ENCODE measurements at regions of chr1 and their contacts with region 1.

Region 1: GRCh38 chr1:51871351-51871975 is 7.1 kb downstream of the NRDC start:
- DNase-seq: no peak
- ATAC-seq: no peak
- H3K4me3 ChIP-seq: no peak overlapping the region
- H3K27ac ChIP-seq: peak overlapping the region; percentile 30; the same call in 1 of the 3 replicates
- H3K4me1 ChIP-seq: peaks cover 26 to 39% of the 10 kb centered on the region in 2 experiments; a peak in 4 of 5 replicates
- H3K27me3 ChIP-seq: no peaks in the 10 kb centered on the region
- CTCF ChIP-seq: no peak
- EP300 ChIP-seq: no peak
- POLR2A ChIP-seq: 0 out of 2 replicates have a peak, but pooled peaks have one; percentile 8
- RAD21 ChIP-seq: no peak

Region 2: DNA sequence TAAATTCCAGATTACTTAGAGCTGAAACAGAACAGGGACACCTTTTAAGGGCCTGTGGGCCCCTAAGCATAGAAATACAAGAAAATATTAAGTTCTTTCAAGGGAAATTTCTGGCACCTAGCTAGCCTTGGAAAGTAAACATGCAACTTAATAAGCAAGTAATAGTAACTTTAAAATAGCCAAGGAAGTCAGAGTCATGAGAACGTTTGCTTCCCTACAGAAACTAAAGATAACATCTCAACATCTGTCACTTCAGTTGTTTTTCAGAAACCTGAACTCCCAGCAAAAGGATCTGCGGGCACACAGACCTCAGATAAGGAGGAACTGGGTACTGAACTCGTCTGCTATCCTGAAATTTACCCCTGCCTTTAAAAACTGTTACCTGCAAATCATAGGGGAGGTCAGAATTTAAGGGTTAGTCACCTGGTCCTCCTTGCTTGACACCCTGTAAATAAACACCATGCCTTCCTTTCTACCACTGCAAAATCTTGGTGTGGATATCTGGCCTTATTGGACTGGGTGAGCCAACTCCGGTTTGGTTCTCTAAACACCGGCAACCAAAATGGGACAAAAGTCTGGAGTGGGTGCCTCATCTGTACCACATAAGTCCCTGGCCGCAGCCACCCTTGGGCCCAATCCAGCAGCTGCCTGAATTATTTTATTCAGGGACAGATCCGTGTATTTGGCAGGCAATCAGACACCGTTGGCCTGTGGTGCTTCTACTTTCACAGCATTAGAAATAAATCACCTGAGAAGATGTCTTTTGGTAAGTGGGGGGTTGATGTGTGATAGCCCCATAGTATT is 20.8 kb before region 1 on chr1:
- CTCF ChIA-PET with region 1: no interaction called
- POLR2A ChIA-PET with region 1: interaction called, 12 read pairs
- in situ Hi-C with region 1: no loop called
- intact Hi-C with region 1: loop called (anchors 2 kb)
- DNase-seq: peak in 3 of 4 experiments; percentile 28 to 83 (median 51)
- ATAC-seq: peak; percentile 78
- H3K4me3 ChIP-seq: 0 out of 2 replicates have a peak overlapping the region, but pooled peaks have one; percentile 5
- H3K27ac ChIP-seq: peak overlapping the region; percentile 78
- H3K4me1 ChIP-seq: peaks cover 4 to 22% of the 10 kb centered on the region in 2 experiments; a peak in 4 of 5 replicates
- H3K27me3 ChIP-seq: no peaks in the 10 kb centered on the region
- CTCF ChIP-seq: no peak
- EP300 ChIP-seq: peak; percentile 90
- POLR2A ChIP-seq: 0 out of 2 replicates have a peak, but pooled peaks have one; percentile 7
- RAD21 ChIP-seq: no peak

Region 3: DNA sequence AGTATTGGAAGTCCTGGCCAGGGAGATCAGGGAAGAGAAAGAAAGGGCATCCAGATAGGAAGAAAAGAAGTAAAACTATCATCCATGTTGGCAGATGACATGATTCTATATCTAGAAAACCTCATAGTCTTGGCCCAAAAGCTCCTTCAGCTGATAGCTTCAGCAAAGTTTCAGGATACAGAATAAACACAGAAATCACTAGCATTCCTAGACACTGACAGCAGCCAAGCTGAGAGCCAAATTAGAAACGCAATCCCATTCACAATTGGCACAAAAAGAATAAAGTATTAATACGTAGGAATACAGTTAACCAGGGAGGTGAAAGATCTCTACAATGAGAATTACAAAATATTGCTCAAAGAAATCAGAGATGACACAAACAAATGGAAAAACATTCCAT is 315.0 kb after region 1 on chr1:
- CTCF ChIA-PET with region 1: no interaction called
- POLR2A ChIA-PET with region 1: no interaction called
- in situ Hi-C with region 1: no loop called
- intact Hi-C with region 1: no loop called
- DNase-seq: no peak
- ATAC-seq: no peak
- H3K4me3 ChIP-seq: no peak overlapping the region
- H3K27ac ChIP-seq: no peak overlapping the region
- H3K4me1 ChIP-seq: peaks cover 11 to 12% of the 10 kb centered on the region in 2 experiments; a peak in 4 of 5 replicates
- H3K27me3 ChIP-seq: no peaks in the 10 kb centered on the region
- CTCF ChIP-seq: no peak
- EP300 ChIP-seq: no peak
- POLR2A ChIP-seq: no peak
- RAD21 ChIP-seq: no peak